Left cardiac atrium (tissue), 4 donors: ENCODE measurements at regions of chr6 and their contacts with region 1.

Region 1: GRCh38 chr6:117317261-117317660 is 51.9 kb downstream of the VGLL2 start:
- DNase-seq: no peak
- ATAC-seq: peak in 1 of 2 donors; percentile 34

Region 2: DNA sequence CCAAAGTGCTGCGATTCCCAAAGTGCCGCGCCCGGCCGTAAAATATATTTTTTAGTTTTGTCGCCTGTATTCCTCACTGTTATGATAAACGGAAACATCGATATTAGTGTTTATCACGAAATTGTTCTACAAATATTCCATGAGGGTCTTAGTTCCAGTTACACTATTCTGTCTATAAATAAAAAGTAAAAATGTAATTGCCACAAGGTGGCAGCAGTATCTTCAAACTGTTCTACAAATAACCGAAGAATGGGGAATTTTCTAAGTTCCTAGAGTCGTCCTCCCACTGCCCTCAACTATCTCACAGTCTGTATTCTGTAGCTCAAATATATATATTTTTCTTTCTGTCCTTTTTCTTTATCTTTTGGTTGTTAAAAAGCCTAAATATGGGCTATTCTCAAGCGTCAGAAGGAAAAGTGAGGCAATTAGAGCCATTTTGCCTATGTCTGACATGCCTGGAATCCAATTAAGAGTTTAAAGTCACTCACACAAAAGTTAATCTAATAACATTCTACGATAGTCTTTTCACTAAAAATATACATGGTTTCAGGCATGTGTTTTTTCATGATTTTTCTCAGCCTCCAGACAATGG is 537.6 kb before region 1 on chr6:
- intact Hi-C with region 1: loop called in 1 of 2 experiments (anchors 5 kb)
- DNase-seq: no peak
- ATAC-seq: peak in 1 of 2 donors; percentile 19

Region 3: DNA sequence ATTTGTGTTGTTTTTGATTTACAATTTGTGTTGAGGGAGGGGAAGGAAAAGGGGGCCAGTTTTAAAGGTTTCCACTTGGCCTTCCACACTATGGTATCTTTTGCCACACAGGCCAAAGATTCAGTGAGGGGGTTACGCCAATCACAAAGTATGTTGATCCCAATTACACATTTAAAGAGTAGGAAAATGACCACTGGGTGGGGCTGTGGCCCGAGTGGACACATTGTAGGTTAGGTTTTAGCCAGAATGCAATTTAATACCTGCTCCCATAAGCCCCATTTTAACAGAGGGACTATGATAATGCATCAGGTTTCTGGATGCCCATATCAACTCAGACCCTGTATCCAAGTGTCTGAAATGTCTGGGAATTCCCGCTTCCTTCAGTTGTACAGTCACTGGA is 36.3 kb before region 1 on chr6:
- intact Hi-C with region 1: no loop called
- DNase-seq: no peak
- ATAC-seq: no peak

Region 4: GRCh38 chr6:117459204-117459944 is 142.1 kb after region 1 on chr6:
- intact Hi-C with region 1: no loop called
- DNase-seq: no peak
- ATAC-seq: no peak